SK-N-SH (cell line): ENCODE measurements at regions of chr2 and their contacts with region 1.

Region 1: DNA sequence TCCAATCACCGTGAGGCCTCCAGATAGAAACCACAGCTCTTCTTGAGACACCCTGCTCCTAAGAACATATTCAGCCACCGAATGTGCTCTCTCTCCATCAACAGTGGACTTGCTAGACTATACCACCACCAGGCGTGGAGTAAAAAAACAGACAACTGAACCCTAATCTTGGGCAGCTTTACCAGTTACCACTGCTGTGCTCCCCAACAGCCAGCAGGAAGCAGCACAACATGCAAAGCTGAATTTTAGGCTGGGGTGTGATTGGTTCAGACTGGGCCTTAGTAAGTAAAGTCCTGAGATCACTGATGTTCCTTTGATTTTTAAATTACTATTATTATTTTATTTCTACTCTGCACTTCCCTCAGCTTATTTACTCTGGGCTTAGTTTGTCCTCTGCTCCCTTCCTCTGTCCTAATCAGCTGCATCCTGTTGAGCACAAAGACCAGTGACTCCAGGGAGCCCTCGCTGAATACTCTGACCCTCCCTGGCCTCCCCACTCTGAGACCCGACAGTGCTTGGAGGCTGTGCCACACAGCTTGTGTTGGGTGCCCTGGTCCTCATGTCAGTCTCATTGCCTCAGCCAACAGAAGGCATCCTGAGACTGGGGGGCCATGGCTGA is 21.9 kb downstream of the MRPL35 start:
- DNase-seq: peak; percentile 71
- H3K4me3 ChIP-seq: no peak overlapping the region
- H3K27ac ChIP-seq: no peak overlapping the region
- H3K4me1 ChIP-seq: peaks cover 6 to 27% of the 10 kb centered on the region in 2 experiments; a peak in 2 of 4 replicates
- H3K27me3 ChIP-seq: no peaks in the 10 kb centered on the region
- CTCF ChIP-seq: peak; percentile 97
- EP300 ChIP-seq: no peak
- RAD21 ChIP-seq: peak; percentile 88

Region 2: GRCh38 chr2:86234563-86235131 is 13.5 kb after region 1 on chr2:
- CTCF ChIA-PET with region 1: interaction called, 14 read pairs
- POLR2A ChIA-PET with region 1: no interaction called
- DNase-seq: no peak
- H3K4me3 ChIP-seq: no peak overlapping the region
- H3K27ac ChIP-seq: no peak overlapping the region
- H3K4me1 ChIP-seq: peaks cover 0 to 7% of the 10 kb centered on the region in 2 experiments; a peak in 2 of 4 replicates
- H3K27me3 ChIP-seq: no peaks in the 10 kb centered on the region; the same call in 1 of the 2 replicates
- CTCF ChIP-seq: no peak
- EP300 ChIP-seq: no peak
- RAD21 ChIP-seq: no peak

Region 3: GRCh38 chr2:86286516-86286915 is 65.3 kb after region 1 on chr2:
- CTCF ChIA-PET with region 1: interaction called, 31 read pairs
- POLR2A ChIA-PET with region 1: no interaction called
- DNase-seq: peak; percentile 40
- H3K4me3 ChIP-seq: no peak overlapping the region
- H3K27ac ChIP-seq: peak overlapping the region in 1 of 2 experiments; percentile 69; a peak in 2 of 4 replicates
- H3K4me1 ChIP-seq: peaks cover 0 to 22% of the 10 kb centered on the region in 2 experiments; a peak in 1 of 4 replicates
- H3K27me3 ChIP-seq: peaks cover 14% of the 10 kb centered on the region; the same call in 1 of the 2 replicates
- CTCF ChIP-seq: no peak
- EP300 ChIP-seq: peak in 1 of 2 experiments; percentile 21; a peak in 1 of 4 replicates
- RAD21 ChIP-seq: peak; percentile 44; the same call in 1 of the 2 replicates

Region 4: DNA sequence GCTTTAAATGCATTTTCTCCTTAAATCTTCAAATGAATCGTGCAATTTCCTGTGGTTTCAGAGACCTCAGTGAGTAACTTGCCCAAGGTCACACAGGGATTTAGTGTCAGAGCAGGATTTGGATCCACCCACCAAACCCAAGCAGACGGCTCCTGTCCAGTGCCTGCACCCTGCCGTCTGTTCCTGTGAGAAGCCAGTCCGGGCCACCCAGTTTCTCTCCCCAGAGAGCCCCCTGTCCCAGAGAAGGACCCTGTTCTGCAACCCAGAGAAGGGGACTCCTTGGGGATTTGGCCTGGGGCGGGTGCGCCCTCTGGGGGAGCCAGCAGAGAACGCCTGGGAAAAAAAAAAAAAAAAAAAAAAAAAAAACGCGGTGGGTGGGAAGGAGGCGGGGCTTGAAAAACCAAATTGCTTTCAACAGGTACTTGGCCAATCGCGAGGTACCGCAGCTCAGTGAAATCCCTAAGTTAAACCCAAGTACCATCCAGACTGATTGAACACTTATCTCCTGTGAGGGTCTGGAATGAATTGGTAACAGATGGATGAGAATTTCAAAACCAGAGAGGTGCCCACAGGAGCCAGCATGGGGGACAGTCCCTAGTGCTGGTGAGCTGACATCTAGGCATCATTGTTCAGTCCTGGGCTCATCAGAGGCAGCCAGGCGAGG is 147.1 kb after region 1 on chr2:
- CTCF ChIA-PET with region 1: interaction called, 150 read pairs
- POLR2A ChIA-PET with region 1: no interaction called
- DNase-seq: peak; percentile 81
- H3K4me3 ChIP-seq: no peak overlapping the region
- H3K27ac ChIP-seq: no peak overlapping the region
- H3K4me1 ChIP-seq: peaks cover 0 to 3% of the 10 kb centered on the region in 2 experiments; a peak in 1 of 4 replicates
- H3K27me3 ChIP-seq: no peaks in the 10 kb centered on the region
- CTCF ChIP-seq: peak; percentile 61
- EP300 ChIP-seq: no peak
- RAD21 ChIP-seq: peak; percentile 74